Body of pancreas (tissue), 4 donors: ENCODE measurements at regions of chr1 and their contacts with region 1.

Region 1: DNA sequence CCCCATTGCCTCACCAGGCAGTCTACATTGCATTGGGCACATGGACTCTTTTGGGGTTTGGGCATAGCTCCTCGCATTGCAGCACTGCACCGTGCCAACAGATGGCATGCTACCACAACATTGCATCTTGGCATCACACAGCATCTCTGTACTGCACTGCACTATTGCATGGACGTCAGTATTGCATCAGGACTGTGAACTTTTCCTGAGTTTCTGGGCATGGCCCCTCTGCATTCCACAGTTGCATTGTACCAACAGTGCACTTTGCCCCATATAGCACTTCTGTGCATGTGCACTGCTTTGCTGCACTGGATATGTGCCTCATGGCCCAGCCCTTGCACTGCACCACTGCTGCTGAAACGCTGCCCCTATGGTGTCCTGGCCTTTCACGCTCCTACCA is 9.6 kb downstream of the PTPRU start:
- DNase-seq: peak in 1 of 4 donors; percentile 38
- ATAC-seq: peak; percentile 54
- H3K4me3 ChIP-seq: no peak overlapping the region
- H3K27ac ChIP-seq: no peak overlapping the region
- H3K4me1 ChIP-seq: peaks cover 8% of the 10 kb centered on the region
- H3K27me3 ChIP-seq: no peaks in the 10 kb centered on the region
- CTCF ChIP-seq: peak in 4 of 7 experiments; percentile 30 to 46 (median 38)
- POLR2A ChIP-seq: no peak

Region 2: DNA sequence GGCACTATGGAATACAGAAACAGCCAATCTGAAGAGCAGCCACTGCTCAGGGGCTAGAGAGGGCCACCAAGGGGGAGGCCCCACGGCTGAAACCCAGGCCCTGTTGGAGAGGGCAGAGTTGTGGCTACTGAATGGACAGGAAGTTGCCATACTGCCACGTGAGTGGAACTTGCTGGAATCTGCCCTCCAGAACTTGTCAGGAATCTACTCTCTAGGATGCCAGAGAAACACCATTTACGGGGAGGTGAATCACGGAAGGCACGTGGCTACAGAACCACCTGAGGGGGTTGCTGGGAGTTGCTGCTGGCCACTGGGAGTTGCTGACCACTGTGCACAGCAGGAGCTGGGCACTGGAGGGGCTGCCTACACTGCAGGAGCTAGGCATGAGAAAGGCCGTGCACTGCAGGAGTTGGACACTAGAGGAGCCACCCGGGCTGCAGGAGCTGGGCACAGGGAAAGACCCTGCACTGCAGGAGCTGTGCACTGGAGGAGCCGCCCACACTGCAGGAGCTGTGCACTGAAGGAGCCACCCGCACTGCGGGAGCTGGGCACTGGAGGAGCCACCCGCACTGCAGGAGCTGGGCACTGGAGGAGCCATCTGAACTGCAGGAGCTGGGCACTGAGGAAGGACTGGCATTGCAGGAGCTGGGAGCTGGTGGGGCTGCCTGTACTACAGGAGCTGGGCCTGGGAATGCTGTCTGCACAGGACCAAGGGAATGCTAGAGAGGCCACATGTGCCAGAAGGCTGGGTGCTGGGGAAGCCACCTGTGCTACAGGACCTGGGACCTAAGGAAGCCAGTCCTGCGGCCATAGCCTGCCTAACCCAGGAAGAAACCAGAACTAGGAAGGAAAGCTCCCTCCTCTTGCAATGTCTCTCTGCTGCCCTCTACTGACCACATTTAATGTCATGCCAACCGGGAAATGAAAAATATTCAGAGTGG is 1134.1 kb after region 1 on chr1:
- intact Hi-C with region 1: loop called (anchors 10 kb)
- DNase-seq: peak; percentile 62 to 76 (median 68)
- ATAC-seq: peak; percentile 84
- H3K4me3 ChIP-seq: no peak overlapping the region
- H3K27ac ChIP-seq: no peak overlapping the region
- H3K4me1 ChIP-seq: peaks cover 5% of the 10 kb centered on the region
- H3K27me3 ChIP-seq: no peaks in the 10 kb centered on the region
- CTCF ChIP-seq: peak; percentile 75 to 94 (median 91)
- POLR2A ChIP-seq: no peak

Region 3: GRCh38 chr1:30707412-30708360 is 1461.8 kb after region 1 on chr1:
- intact Hi-C with region 1: loop called (anchors 10 kb)
- DNase-seq: peak; percentile 71 to 79 (median 77)
- ATAC-seq: peak; percentile 92
- H3K4me3 ChIP-seq: no peak overlapping the region
- H3K27ac ChIP-seq: no peak overlapping the region
- H3K4me1 ChIP-seq: peaks cover 8% of the 10 kb centered on the region
- H3K27me3 ChIP-seq: no peaks in the 10 kb centered on the region
- CTCF ChIP-seq: peak; percentile 49 to 97 (median 94)
- POLR2A ChIP-seq: no peak